ENCODE measurements at regions of chr1 and their contacts with region 1.

Region 1: GRCh38 chr1:186325239-186325638 is 49.8 kb downstream of the TPR start:
- DNase-seq: no peak
- ATAC-seq: no peak
- H3K4me3 Mint-ChIP-seq: no peak overlapping the region
- H3K27ac Mint-ChIP-seq: no peak overlapping the region
- H3K4me1 Mint-ChIP-seq: peaks cover 10% of the 10 kb centered on the region
- H3K27me3 Mint-ChIP-seq: no peaks in the 10 kb centered on the region

Region 2: DNA sequence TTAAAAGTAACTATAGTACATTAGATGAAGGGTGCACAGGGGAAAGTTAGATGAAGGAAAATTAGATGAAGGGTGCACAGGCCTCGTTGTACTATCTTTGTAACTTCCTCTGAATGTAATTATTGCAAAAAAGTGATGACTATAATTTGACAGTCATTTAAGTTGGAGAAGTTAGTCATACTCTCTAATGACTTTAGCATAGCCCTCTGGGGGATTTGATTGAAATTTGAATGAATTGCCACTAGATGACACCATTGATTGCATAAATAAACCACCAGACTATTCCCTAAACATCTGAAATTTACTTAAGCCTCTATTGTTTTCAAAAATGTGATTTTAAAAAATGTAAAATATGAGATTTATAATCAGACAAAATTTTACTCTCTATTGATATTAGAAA is 52.8 kb before region 1 on chr1:
- CTCF ChIA-PET with region 1: interaction called, 19 read pairs
- POLR2A ChIA-PET with region 1: no interaction called
- DNase-seq: no peak
- ATAC-seq: no peak
- H3K4me3 Mint-ChIP-seq: no peak overlapping the region
- H3K27ac Mint-ChIP-seq: no peak overlapping the region
- H3K4me1 Mint-ChIP-seq: no peaks in the 10 kb centered on the region
- H3K27me3 Mint-ChIP-seq: peaks cover 2% of the 10 kb centered on the region

Region 3: DNA sequence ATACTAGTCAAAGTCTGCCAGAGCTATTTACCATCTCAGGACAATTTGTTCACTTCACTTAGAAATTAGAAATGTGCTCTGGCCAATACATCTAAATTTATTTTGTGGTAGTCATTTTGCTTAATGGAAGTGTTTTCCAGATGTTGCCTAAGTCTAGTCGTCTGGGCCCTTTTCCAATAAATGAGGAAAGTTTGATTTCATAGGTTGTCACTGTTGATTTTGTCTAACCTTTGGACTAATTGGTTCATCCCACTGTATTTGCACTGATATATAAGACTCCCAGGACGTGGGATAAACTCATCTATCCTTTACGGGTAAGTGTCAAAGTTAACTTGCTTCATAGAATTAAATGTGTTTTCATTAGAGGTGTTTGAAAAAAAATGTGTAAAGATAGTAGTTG is 29.3 kb before region 1 on chr1:
- CTCF ChIA-PET with region 1: no interaction called
- POLR2A ChIA-PET with region 1: no interaction called
- DNase-seq: no peak
- ATAC-seq: no peak
- H3K4me3 Mint-ChIP-seq: no peak within 1 kb of the TSS
- H3K27ac Mint-ChIP-seq: no peak within 1 kb of the TSS
- H3K4me1 Mint-ChIP-seq: no peaks in the 10 kb centered on the region
- H3K27me3 Mint-ChIP-seq: no peaks in the 10 kb centered on the region

Region 4: GRCh38 chr1:186340772-186341171 is 15.5 kb after region 1 on chr1:
- CTCF ChIA-PET with region 1: interaction called, 25 read pairs
- POLR2A ChIA-PET with region 1: no interaction called
- DNase-seq: no peak
- ATAC-seq: no peak
- H3K4me3 Mint-ChIP-seq: no peak overlapping the region
- H3K27ac Mint-ChIP-seq: no peak overlapping the region
- H3K4me1 Mint-ChIP-seq: no peaks in the 10 kb centered on the region
- H3K27me3 Mint-ChIP-seq: no peaks in the 10 kb centered on the region